ENCODE measurements at regions of chr14 and their contacts with region 1.

Region 1: GRCh38 chr14:76956316-76957090 is 72.0 kb downstream of the IRF2BPL start:
- DNase-seq: peak; percentile 97
- H3K4me3 Mint-ChIP-seq: peak overlapping the region; percentile 49
- H3K27ac Mint-ChIP-seq: peak overlapping the region; percentile 92
- H3K4me1 Mint-ChIP-seq: peaks cover 55% of the 10 kb centered on the region
- H3K27me3 Mint-ChIP-seq: no peaks in the 10 kb centered on the region
- CTCF ChIP-seq: no peak

Region 2: DNA sequence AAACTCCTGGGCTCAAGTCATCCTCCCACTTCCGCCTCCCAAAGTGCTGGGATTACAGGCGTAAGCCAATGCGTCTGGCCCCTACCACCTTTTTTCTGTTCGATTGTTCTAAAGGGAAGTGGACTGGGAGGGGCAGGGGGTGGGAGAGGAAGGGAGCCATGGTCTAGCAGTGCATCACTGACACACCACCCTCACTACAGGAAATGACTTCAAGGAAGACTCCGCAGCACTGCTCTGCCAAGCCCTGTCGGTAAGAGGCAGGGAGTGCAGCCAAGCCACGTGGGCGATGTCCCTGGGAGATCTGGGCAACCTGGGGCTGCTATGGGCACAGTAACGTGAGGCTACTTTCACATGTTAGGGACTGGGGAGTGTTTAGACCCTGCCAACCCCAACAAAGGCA is 112.3 kb before region 1 on chr14:
- CTCF ChIA-PET with region 1: no interaction called
- POLR2A ChIA-PET with region 1: no interaction called
- intact Hi-C with region 1: no loop called
- DNase-seq: peak; percentile 57
- H3K4me3 Mint-ChIP-seq: no peak overlapping the region
- H3K27ac Mint-ChIP-seq: no peak overlapping the region
- H3K4me1 Mint-ChIP-seq: peaks cover 6% of the 10 kb centered on the region
- H3K27me3 Mint-ChIP-seq: peaks cover 15% of the 10 kb centered on the region
- CTCF ChIP-seq: no peak

Region 3: DNA sequence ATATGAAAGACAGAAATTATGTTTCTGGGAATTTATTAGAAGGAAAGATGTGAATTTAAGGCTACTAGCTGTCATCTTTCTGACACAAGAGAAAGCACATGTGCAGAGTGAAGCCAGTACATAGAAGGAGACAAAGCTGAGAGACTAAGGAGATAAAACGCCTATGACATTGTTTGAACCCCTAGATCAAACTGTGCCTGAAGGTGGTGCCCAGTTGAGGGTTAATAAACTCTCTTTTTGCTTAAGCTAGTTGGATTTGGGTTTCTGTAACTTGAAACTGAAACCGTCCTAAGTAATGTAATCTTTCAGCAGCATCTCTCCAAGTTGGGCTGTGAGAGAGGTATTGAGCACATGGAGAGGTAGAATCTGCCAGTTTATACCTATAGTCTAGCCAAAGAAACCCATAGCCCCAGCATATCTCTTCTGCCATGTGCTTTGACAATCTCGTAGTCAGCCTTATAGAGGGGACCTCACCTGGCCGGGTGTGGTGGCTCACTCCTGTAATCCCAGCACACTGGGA is 46.1 kb before region 1 on chr14:
- CTCF ChIA-PET with region 1: interaction called, 16 read pairs
- POLR2A ChIA-PET with region 1: interaction called, 8 read pairs
- intact Hi-C with region 1: no loop called
- DNase-seq: no peak
- H3K4me3 Mint-ChIP-seq: no peak overlapping the region
- H3K27ac Mint-ChIP-seq: no peak overlapping the region
- H3K4me1 Mint-ChIP-seq: peaks cover 6% of the 10 kb centered on the region
- H3K27me3 Mint-ChIP-seq: no peaks in the 10 kb centered on the region
- CTCF ChIP-seq: no peak

Region 4: GRCh38 chr14:76977793-76978720 is 21.6 kb after region 1 on chr14:
- CTCF ChIA-PET with region 1: no interaction called
- POLR2A ChIA-PET with region 1: no interaction called
- intact Hi-C with region 1: no loop called
- DNase-seq: no peak
- H3K4me3 Mint-ChIP-seq: no peak overlapping the region
- H3K27ac Mint-ChIP-seq: no peak overlapping the region
- H3K4me1 Mint-ChIP-seq: no peaks in the 10 kb centered on the region
- H3K27me3 Mint-ChIP-seq: no peaks in the 10 kb centered on the region
- CTCF ChIP-seq: no peak